Aorta (tissue), 5 donors: ENCODE measurements at regions of chr18 and their contacts with region 1.

Region 1: DNA sequence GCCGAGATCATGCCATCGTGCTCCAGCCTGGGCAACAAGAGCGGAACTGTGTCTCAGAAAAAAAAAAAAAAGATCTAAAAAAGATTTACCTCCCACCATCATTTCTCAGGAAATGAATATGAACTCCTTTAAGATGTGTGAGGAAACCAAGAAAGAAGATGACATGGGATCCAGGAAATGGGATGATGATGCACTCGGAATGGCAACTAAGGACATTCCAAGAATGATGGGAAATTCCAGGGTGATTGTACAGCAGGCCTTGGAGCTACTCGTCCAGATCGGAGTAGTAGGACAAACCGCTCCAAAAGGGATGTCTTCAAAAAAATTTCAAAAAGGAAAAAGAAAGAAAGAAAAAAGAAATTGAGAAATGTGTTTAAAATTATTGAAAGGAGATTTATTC is 84.9 kb upstream of the PMAIP1 start:
- DNase-seq: no peak
- ATAC-seq: no peak
- H3K4me3 ChIP-seq: no peak overlapping the region
- H3K27ac ChIP-seq: no peak overlapping the region
- H3K4me1 ChIP-seq: no peaks in the 10 kb centered on the region
- H3K27me3 ChIP-seq: peaks cover 0 to 3% of the 10 kb centered on the region in 2 donors

Region 2: DNA sequence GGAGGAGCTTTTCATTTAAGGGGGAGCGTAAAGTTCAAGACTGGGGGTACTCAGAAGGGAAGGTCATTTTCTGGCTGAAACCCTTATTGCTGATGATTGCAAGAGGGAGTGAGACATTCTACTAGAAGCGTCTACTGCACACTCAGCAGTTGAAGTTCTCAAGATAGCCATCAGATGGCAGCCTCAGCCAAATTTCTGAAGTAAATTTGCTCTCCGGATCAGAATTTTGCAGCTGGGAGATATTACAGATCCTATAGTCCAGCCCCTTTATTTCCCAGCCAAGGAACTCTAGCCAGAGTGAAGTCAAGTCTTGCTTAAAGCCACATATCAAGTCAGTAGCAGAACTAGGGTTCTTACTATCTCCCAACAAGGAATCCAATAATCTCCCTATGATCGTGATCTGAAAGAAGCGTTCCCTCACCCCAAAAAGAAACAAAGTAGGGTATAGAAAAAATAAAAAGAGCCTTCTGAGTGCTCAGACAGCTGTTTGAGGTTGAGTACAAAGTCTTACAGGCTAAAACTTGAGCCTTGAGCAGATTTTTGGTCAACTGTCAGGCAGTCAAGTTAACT is 565.6 kb before region 1 on chr18:
- intact Hi-C with region 1: no loop called
- DNase-seq: no peak
- ATAC-seq: peak; percentile 50
- H3K4me3 ChIP-seq: no peak overlapping the region
- H3K27ac ChIP-seq: no peak overlapping the region
- H3K4me1 ChIP-seq: no peaks in the 10 kb centered on the region
- H3K27me3 ChIP-seq: no peaks in the 10 kb centered on the region

Region 3: DNA sequence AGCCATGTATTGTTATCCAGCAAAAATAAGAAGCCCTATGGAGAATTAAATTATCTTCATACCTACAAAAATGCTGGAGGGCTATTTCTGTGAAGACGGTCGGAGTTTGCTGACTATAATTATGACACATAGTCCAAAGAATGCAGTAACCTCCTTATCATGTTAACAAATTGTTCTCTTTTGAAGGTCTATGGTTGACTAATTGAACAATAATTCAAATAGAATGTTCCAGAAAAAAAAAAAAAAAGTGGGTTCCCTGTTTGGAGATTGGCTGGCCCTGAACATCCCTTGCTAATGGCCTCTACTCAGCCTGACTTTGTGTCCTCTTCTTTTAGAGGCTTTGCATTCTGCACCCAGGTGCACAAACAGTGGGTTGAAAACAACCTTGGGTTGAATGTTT is 34.9 kb before region 1 on chr18:
- intact Hi-C with region 1: loop called in 1 of 2 experiments (anchors 5 kb)
- DNase-seq: no peak
- ATAC-seq: no peak
- H3K4me3 ChIP-seq: no peak overlapping the region
- H3K27ac ChIP-seq: no peak overlapping the region
- H3K4me1 ChIP-seq: no peaks in the 10 kb centered on the region
- H3K27me3 ChIP-seq: no peaks in the 10 kb centered on the region